PC-9 (cell line): ENCODE measurements at regions of chr11 and their contacts with region 1.

Region 1: GRCh38 chr11:126355324-126355925 is at the start of gene ST3GAL4:
- DNase-seq: peak; percentile 55 to 83
- H3K4me3 ChIP-seq: peak within 1 kb of the TSS; percentile 94
- H3K27ac ChIP-seq: peak within 1 kb of the TSS; percentile 99
- H3K4me1 ChIP-seq: peaks cover 71% of the 10 kb centered on the region
- H3K27me3 ChIP-seq: no peaks in the 10 kb centered on the region
- CTCF ChIP-seq: no peak
- total RNA-seq, gene ST3GAL4: 44.1 and 46.2 TPM in 2 replicates

Region 2: DNA sequence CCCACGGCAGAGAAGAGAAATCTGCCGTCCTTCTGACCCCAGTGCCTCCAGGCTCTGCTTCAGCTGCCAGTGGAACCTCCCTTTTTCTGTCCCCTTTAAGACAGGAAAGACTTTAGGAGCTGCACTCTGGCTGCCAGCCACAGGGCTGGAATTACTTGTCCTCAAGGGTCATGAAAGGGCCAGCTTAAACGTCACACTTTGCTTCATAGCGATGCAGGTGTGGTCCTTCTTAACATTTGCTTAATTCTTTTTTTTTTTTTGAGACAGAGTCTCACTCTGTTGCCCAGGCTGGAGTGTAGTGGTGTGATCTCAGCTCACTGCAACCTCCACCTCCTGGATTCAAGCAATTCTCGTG is 15.4 kb before region 1 on chr11:
- CTCF ChIA-PET with region 1: interaction called, 11 read pairs
- POLR2A ChIA-PET with region 1: interaction called, 7 read pairs
- intact Hi-C with region 1: loop called (anchors 1 kb)
- DNase-seq: peak; percentile 84 to 97
- H3K4me3 ChIP-seq: no peak overlapping the region
- H3K27ac ChIP-seq: peak overlapping the region; percentile 77
- H3K4me1 ChIP-seq: peaks cover 75% of the 10 kb centered on the region
- H3K27me3 ChIP-seq: no peaks in the 10 kb centered on the region
- CTCF ChIP-seq: no peak